CD4-positive, alpha-beta T cell (primary cell): ENCODE measurements at regions of chr2 and their contacts with region 1.

Region 1: DNA sequence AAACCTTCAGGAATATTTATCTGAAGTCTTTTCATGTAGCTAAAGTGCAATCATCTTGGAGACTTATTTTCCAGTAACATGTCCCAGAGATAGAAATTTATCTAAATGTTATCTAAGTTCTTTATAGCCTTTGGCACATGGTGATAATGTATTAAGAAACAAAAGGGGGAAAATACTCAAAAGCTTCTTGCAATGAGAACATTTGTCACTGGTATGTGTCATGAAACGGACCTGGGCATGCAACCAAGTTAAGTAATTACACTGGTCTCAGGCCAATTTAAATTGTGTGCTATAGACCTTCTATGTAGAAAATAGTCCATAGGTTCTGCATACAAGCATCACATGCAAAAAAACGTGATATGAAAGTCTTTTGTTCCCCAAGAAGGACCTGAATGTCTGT is 136.2 kb downstream of the SLC8A1 start:
- DNase-seq: no peak
- ATAC-seq: no peak
- H3K4me3 ChIP-seq: no peak overlapping the region
- H3K4me3 Mint-ChIP-seq: no peak overlapping the region
- H3K27ac ChIP-seq: no peak overlapping the region
- H3K27ac Mint-ChIP-seq: no peak overlapping the region
- H3K4me1 ChIP-seq: no peaks in the 10 kb centered on the region
- H3K4me1 Mint-ChIP-seq: no peaks in the 10 kb centered on the region
- H3K27me3 ChIP-seq: no peaks in the 10 kb centered on the region
- H3K27me3 Mint-ChIP-seq: no peaks in the 10 kb centered on the region
- CTCF ChIP-seq: no peak

Region 2: DNA sequence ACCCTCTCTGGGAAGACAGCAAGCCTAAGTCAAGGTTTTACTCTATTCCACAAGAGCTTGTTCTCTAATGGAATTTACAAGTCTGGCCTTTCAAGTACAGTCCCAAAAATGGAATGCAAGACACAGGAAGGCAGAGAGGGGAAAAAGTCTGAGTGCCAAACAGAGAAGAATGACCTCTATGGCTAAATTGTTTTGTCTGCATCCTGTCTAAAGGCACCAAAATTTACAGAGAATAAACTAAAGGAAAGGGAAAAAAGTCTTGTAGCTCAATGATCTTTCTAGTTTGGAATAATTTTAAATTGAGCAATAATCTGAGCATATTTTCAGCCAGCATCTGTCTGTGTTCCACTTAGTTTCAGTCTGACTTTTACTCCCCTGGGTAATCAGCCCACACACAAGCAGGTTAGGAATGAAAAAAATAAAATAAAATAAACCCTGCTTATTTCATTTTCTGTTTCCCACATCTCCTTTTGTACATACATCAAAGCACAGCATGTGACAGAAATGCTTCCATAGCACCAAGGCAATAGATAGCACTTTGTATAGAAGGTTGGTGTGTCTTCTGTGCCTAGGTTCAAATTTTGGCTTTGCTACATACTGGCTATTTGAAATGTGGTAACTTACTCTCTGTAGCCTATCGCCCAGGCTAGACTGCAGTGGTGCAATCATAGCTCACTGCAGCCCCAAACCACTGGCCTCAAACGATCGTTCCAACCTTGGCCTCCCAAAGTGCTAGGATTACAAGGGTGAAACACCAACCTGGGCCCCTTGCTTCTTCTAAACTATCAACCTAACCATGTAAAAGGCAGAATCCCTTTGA is 31.1 kb after region 1 on chr2:
- CTCF ChIA-PET with region 1: no interaction called
- POLR2A ChIA-PET with region 1: no interaction called
- intact Hi-C with region 1: no loop called
- DNase-seq: no peak
- ATAC-seq: no peak
- H3K4me3 ChIP-seq: no peak overlapping the region
- H3K4me3 Mint-ChIP-seq: no peak overlapping the region
- H3K27ac ChIP-seq: no peak overlapping the region
- H3K27ac Mint-ChIP-seq: no peak overlapping the region
- H3K4me1 ChIP-seq: no peaks in the 10 kb centered on the region
- H3K4me1 Mint-ChIP-seq: no peaks in the 10 kb centered on the region
- H3K27me3 ChIP-seq: no peaks in the 10 kb centered on the region
- H3K27me3 Mint-ChIP-seq: no peaks in the 10 kb centered on the region
- CTCF ChIP-seq: no peak

Region 3: DNA sequence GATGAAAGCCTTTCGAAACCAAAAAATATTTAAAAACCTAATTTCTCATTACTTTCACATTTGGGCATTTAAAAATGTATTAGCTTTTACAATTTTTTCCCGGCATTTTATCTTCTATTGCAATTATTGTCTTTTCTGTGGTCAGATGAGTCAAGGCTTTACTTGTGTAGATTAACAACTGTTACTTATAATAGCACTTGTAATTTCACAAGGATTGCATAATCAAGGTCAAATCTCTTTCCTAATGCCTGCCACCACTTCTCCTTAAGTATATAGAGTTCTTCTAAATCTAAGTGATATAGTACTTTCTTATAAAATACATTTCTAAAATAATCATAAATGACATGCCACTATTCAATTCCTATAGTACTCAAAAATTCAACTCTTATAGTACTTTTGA is 69.0 kb after region 1 on chr2:
- CTCF ChIA-PET with region 1: no interaction called
- POLR2A ChIA-PET with region 1: no interaction called
- intact Hi-C with region 1: loop called in 1 of 2 experiments (anchors 2 kb)
- DNase-seq: peak in 3 of 14 experiments; percentile 15 to 28 (median 23)
- ATAC-seq: no peak
- H3K4me3 ChIP-seq: no peak overlapping the region
- H3K4me3 Mint-ChIP-seq: no peak overlapping the region
- H3K27ac ChIP-seq: no peak overlapping the region
- H3K27ac Mint-ChIP-seq: no peak overlapping the region
- H3K4me1 ChIP-seq: no peaks in the 10 kb centered on the region
- H3K4me1 Mint-ChIP-seq: no peaks in the 10 kb centered on the region
- H3K27me3 ChIP-seq: no peaks in the 10 kb centered on the region
- H3K27me3 Mint-ChIP-seq: no peaks in the 10 kb centered on the region
- CTCF ChIP-seq: no peak